Posterior vena cava (tissue), 2 donors: ENCODE measurements at regions of chr19 and their contacts with region 1.

Region 1: GRCh38 chr19:49085020-49085867 is at the start of gene SNRNP70:
- DNase-seq: peak; percentile 100
- total RNA-seq, gene SNRNP70: 114 to 124 TPM

Region 2: GRCh38 chr19:49210108-49210900 is 125.1 kb after region 1 on chr19:
- intact Hi-C with region 1: loop called in 1 of 2 experiments (anchors 2 kb)
- DNase-seq: peak; percentile 85